Prostate gland (tissue), 2 donors: ENCODE measurements at regions of chr11 and their contacts with region 1.

Region 1: DNA sequence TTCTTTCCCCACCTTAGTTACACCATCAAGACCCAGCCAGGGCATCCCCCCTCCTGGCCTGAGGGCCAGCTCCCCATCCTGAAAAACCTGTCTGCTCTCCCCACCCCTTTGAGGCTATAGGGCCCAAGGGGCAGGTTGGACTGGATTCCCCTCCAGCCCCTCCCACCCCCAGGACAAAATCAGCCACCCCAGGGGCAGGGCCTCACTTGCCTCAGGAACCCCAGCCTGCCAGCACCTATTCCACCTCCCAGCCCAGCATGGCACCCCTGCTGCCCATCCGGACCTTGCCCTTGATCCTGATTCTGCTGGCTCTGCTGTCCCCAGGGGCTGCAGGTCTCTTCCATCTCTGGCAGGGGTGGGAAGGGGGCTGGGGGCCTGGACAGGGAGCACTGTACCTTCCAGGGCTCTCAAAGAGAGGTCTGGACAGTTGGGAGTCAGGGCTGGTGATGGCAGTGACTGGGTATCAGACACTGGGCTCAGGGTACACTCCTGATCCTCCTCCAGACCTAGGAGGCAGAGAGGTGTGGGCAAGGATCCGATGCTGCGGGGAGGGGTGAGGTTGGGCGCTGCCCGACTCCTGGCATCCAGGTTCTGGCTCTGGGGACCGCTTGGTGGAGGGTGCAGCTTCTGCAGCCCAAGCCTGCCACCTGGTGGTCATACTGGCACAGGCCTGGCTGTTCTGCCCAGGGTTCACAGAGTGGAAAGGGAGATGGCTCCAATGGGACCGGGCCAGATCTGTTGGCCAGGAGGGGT is at the start of gene UPK2:
- DNase-seq: peak; percentile 83
- H3K4me3 ChIP-seq: no peak within 1 kb of the TSS
- H3K27ac ChIP-seq: no peak within 1 kb of the TSS
- H3K4me1 ChIP-seq: no peaks in the 10 kb centered on the region
- H3K27me3 ChIP-seq: no peaks in the 10 kb centered on the region
- CTCF ChIP-seq: peak; percentile 88 to 99 (median 96)
- POLR2A ChIP-seq: no peak
- total RNA-seq, gene UPK2: not detected

Region 2: DNA sequence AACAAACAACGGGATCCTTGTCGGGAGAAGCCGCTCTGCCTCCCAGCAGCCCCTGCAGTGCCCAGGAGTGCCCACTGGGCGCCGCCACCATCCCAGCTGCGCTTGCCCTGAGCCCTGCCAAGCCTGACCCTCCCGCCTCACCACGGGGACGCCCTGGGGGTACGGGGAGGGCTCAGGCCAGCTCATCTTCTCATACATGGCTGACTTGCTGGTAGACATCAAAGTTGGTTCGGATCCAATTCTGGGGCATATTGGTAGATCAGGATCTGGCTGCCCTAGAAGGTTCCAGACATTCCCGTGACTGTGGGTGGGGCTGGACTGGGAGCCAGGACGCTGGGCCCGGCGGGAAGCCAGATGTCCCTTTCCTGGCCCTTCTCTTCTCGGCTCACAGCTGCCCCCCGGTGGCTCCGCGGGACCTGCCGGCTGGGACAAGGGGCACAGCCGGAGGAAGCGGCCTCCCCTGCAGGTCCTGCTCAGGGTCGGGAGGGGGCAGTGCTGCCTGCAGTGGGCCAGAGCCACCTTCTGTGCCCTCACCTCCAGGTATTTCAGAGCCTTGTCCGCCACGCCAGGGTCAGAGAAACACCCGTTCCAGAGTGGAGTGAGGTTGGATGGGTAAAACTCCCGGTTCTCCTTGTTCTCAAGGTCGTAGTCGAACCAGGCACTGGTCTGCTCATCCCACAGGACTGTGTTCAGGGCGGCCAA is 266.3 kb before region 1 on chr11:
- intact Hi-C with region 1: loop called (anchors 1 kb)
- DNase-seq: peak; percentile 77
- H3K4me3 ChIP-seq: peak overlapping the region; percentile 20 to 25
- H3K27ac ChIP-seq: peak overlapping the region; percentile 80 to 82
- H3K4me1 ChIP-seq: no peaks in the 10 kb centered on the region
- H3K27me3 ChIP-seq: no peaks in the 10 kb centered on the region
- CTCF ChIP-seq: peak; percentile 69 to 89 (median 86)
- POLR2A ChIP-seq: no peak

Region 3: GRCh38 chr11:118913411-118914125 is 42.7 kb before region 1 on chr11:
- intact Hi-C with region 1: no loop called
- DNase-seq: no peak
- H3K4me3 ChIP-seq: no peak overlapping the region
- H3K27ac ChIP-seq: peak overlapping the region; percentile 92 to 97
- H3K4me1 ChIP-seq: peaks cover 90% of the 10 kb centered on the region
- H3K27me3 ChIP-seq: no peaks in the 10 kb centered on the region
- CTCF ChIP-seq: no peak
- POLR2A ChIP-seq: no peak